ENCODE measurements at regions of chr20 and their contacts with region 1.

Region 1: DNA sequence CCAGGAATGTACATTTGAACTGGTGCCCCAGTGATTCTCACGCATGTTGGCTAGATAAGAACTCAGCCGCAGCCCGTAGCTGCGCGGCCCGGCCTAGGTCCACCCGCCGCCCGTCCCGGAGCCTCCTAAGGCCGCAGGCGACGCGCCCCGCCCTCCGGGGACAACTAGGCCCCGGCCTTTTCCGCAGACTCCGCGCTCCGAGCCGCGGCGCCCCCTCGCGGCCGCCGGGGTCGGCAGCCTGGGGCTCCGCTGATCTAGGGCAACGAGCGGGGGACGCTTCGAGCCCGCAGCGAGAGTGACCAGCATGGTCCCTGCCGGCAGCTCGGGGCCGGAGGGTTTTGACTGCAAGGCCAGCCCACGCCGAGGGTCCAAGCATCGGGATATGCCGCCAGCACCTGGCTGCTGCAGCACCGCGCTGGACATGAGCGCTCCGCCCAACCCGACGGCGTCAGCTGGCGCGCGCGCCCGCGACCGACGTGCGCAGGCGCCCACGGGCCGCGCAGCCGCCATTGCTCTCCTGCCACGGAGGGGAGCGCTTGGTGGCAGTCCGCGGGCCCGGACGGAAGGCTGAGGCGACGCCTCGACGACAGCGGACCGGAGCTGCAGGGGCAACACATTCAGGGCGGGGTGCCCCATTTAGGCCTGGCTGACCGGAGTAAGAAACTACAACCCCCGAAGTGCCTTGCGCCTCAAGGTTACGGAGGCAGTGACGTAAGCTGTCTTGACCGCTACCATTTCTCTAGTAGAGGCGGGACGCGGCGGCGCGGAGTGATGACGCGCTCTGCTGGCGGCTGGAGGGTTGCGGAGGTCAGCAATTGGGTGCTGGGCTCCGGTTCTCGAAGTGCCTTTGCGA is at the start of gene AP5S1:
- DNase-seq: peak; percentile 96 to 98 (median 97)
- H3K4me3 ChIP-seq: peak within 1 kb of the TSS; percentile 82
- H3K27ac ChIP-seq: peak within 1 kb of the TSS; percentile 98 to 99
- H3K4me1 ChIP-seq: peaks cover 6% of the 10 kb centered on the region
- H3K27me3 ChIP-seq: no peaks in the 10 kb centered on the region
- CTCF ChIP-seq: peak; percentile 100
- EP300 ChIP-seq: no peak
- POLR2A ChIP-seq: peak; percentile 62
- total RNA-seq, gene AP5S1: 6.8 to 15.3 (median 12.0) TPM

Region 2: GRCh38 chr20:3786665-3787323 is 33.5 kb before region 1 on chr20 and contains the start of gene CENPB:
- intact Hi-C with region 1: loop called (anchors 2 kb)
- DNase-seq: peak; percentile 86 to 94 (median 93)
- H3K4me3 ChIP-seq: peak within 1 kb of the TSS; percentile 69
- H3K27ac ChIP-seq: peak within 1 kb of the TSS; percentile 69 to 71
- H3K4me1 ChIP-seq: peaks cover 13% of the 10 kb centered on the region
- H3K27me3 ChIP-seq: no peaks in the 10 kb centered on the region
- CTCF ChIP-seq: peak; percentile 62 to 77 (median 65)
- EP300 ChIP-seq: no peak
- POLR2A ChIP-seq: no peak
- total RNA-seq, gene CENPB: 43.8 to 119 (median 97.8) TPM

Region 3: DNA sequence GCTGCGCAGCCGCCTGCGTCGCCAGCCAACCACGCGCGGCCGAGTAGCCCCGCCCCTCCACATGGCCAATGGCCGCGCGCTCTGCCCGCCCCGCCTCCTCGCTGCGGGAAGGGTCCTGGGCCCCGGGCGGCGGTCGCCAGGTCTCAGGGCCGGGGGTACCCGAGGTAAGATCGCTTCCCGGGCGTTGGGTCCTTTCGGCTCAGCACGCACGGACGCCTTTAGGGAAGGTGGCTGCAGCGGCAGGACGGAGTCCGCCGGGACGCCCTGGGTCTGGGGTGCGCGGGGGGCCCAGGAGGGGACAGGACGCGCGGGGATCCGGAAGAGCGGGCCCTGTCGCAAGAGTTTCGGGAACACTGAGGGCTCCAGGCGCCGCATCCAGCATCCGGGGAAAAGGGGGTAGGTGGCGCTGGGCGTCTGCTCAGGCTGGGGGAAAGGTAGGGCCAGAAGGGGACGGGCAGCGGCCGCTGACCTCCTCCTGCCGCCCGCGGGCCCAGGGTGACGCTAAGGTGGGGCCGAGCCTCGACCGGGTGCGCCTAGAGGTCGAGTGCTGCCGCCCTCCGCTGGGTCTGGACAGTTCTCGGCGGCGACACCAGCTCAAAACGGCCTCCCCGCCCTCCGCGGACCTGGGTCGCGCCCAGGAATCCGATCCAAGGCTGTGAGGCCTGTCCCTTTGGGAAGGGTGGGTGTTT is 26.6 kb after region 1 on chr20 and contains the start of gene MAVS:
- intact Hi-C with region 1: loop called in 1 of 4 experiments (anchors 2 kb)
- DNase-seq: peak; percentile 89 to 93 (median 90)
- H3K4me3 ChIP-seq: peak within 1 kb of the TSS; percentile 98
- H3K27ac ChIP-seq: peak within 1 kb of the TSS; percentile 77 to 95
- H3K4me1 ChIP-seq: peaks cover 2% of the 10 kb centered on the region
- H3K27me3 ChIP-seq: no peaks in the 10 kb centered on the region
- CTCF ChIP-seq: no peak
- EP300 ChIP-seq: no peak
- POLR2A ChIP-seq: peak; percentile 73
- total RNA-seq, gene MAVS: 14.2 to 50.5 (median 34.5) TPM